Ovary (tissue), 10 donors: ENCODE measurements at regions of chr6 and their contacts with region 1.

Region 1: DNA sequence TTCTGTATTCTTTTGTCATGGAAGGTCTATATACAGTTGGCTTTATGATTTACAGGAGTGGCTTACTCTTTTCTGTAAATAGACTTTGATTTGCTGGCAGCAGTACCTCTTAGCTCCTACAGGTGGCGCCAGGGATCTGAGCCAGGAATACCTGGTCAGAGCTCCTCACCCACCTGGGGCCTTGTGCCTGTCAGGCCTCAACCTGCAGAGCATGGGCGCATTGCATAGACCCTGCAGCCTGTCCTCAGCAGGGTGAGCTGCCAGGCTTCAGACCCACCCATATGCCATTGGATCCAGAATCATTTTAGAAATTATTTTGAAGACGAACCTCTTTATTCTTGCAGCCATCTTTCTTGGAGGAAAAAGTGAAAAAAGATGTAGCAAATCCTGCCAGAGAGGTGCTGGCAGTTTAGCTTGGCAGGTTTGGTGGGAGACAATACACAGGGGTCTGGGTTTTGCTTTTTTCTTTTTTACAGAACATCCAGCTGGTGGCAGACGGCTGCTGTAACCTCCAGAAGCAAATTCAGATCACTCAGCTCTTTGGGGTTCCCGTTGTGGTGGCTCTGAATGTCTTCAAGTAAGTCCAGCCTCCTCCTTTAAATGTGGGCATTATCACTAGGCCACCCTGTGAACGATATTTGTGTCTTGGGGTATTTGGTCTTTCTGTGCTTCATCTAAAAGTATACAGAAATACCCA is 149.1 kb downstream of the MTHFD1L start:
- DNase-seq: peak; percentile 60 to 82 (median 74)
- H3K4me3 ChIP-seq: no peak overlapping the region
- H3K27ac ChIP-seq: no peak overlapping the region
- H3K4me1 ChIP-seq: peaks cover 4% of the 10 kb centered on the region
- H3K27me3 ChIP-seq: no peaks in the 10 kb centered on the region
- CTCF ChIP-seq: peak; percentile 79 to 95 (median 95)
- EP300 ChIP-seq: no peak
- POLR2A ChIP-seq: no peak

Region 2: GRCh38 chr6:150830439-150831165 is 183.9 kb before region 1 on chr6:
- intact Hi-C with region 1: no loop called
- DNase-seq: no peak
- H3K4me3 ChIP-seq: no peak overlapping the region
- H3K27ac ChIP-seq: no peak overlapping the region
- H3K4me1 ChIP-seq: no peaks in the 10 kb centered on the region
- H3K27me3 ChIP-seq: no peaks in the 10 kb centered on the region
- CTCF ChIP-seq: no peak
- EP300 ChIP-seq: no peak
- POLR2A ChIP-seq: no peak

Region 3: DNA sequence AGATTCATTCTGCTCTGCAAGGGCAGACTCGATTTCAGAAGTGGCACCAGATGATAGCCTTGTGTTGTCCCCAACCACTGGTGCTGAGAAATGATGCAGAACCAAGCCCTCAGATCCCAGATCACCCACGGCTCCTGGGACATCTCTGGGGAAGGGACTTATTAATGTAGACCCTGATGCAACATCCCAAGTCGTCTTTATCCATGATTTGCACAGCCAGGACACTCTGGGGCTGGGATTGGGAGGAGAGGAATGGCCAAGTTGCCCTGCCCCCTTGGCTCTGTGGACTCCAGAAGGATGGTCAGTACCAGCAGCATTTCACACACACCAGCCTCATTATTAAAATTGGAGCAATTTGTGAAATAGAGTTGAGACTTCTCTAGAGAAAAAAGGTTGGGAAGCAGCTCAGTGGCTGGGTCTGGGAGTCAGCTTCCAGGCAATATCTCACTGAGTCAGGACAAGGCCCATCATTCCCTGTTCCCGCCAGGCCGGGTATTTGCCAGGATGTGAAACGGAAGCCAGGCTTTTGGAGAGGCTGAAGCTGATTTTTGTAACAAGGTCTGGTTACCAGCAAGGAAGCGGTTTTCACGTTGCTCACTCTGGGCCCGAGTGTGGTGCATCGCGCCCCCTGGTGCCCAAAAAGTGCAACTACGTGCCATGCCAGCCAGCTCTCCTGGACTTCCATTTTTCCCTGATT is 309.4 kb after region 1 on chr6:
- intact Hi-C with region 1: loop called (anchors 2 to 5 kb)
- DNase-seq: peak; percentile 86 to 93 (median 93)
- H3K4me3 ChIP-seq: no peak overlapping the region
- H3K27ac ChIP-seq: peak overlapping the region; percentile 12 to 64
- H3K4me1 ChIP-seq: peaks cover 8% of the 10 kb centered on the region
- H3K27me3 ChIP-seq: no peaks in the 10 kb centered on the region
- CTCF ChIP-seq: peak; percentile 96 to 98 (median 97)
- EP300 ChIP-seq: peak; percentile 74
- POLR2A ChIP-seq: no peak